ENCODE measurements at regions of chr10 and their contacts with region 1.

Region 1: GRCh38 chr10:33008499-33009243 is 50.6 kb upstream of the ITGB1 start:
- DNase-seq: peak; percentile 81
- H3K4me3 Mint-ChIP-seq: peak overlapping the region; percentile 52
- H3K27ac Mint-ChIP-seq: peak overlapping the region; percentile 9
- H3K4me1 Mint-ChIP-seq: peaks cover 34% of the 10 kb centered on the region
- H3K27me3 Mint-ChIP-seq: peaks cover 9% of the 10 kb centered on the region

Region 2: GRCh38 chr10:32256613-32257437 is 751.8 kb before region 1 on chr10:
- CTCF ChIA-PET with region 1: no interaction called
- intact Hi-C with region 1: loop called (anchors 5 kb)
- DNase-seq: peak; percentile 81
- H3K4me3 Mint-ChIP-seq: no peak overlapping the region
- H3K27ac Mint-ChIP-seq: no peak overlapping the region
- H3K4me1 Mint-ChIP-seq: peaks cover 8% of the 10 kb centered on the region
- H3K27me3 Mint-ChIP-seq: no peaks in the 10 kb centered on the region

Region 3: DNA sequence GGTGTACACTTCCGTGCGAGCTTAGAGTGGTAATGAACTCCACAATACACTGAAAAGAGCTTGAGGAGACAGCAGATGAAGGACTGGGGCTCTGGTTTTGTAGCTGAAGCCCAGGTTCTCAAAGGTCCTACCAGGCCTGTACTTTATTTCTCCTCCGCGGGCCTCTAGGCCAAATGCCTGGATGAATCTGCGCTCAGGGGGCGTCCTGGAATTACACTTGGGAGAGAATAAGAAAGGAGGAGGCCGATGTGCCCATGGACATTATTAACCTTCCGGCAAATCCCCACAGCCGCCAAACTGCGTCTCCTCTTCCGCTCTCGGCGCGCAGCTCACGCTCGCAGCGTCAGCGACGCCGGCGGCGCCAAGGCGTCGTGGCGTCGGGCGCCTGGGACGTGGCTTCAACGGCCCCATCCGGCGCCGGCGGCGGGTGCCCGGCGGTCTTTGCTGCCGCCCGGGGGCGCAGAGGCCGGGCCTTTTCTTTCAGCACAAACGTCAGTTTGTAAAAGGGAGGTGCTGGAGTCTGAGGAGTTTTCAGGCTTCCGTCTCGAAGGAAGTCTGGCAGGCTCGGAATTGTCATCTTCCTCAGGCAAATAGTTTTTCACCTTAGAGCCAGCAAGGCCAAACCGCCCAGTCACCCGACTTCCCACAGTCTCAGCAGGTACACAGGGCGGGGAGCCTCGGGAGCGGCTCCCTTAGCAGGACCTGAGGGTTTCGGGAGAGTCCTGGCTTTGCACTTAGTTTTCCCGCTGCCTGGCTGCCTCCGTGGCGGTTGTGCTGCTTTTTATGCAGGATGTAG is 562.7 kb before region 1 on chr10 and contains the start of gene CCDC7:
- CTCF ChIA-PET with region 1: no interaction called
- intact Hi-C with region 1: loop called (anchors 1 kb)
- DNase-seq: peak; percentile 85
- H3K4me3 Mint-ChIP-seq: peak within 1 kb of the TSS; percentile 94
- H3K27ac Mint-ChIP-seq: peak within 1 kb of the TSS; percentile 98
- H3K4me1 Mint-ChIP-seq: peaks cover 14% of the 10 kb centered on the region
- H3K27me3 Mint-ChIP-seq: no peaks in the 10 kb centered on the region
- total RNA-seq, gene CCDC7: 6.8 to 8.9 TPM

Region 4: GRCh38 chr10:32795598-32796183 is 213.0 kb before region 1 on chr10:
- CTCF ChIA-PET with region 1: interaction called, 9 read pairs
- intact Hi-C with region 1: loop called (anchors 1 kb)
- DNase-seq: peak; percentile 17
- H3K4me3 Mint-ChIP-seq: no peak overlapping the region
- H3K27ac Mint-ChIP-seq: no peak overlapping the region
- H3K4me1 Mint-ChIP-seq: no peaks in the 10 kb centered on the region
- H3K27me3 Mint-ChIP-seq: no peaks in the 10 kb centered on the region

Region 5: DNA sequence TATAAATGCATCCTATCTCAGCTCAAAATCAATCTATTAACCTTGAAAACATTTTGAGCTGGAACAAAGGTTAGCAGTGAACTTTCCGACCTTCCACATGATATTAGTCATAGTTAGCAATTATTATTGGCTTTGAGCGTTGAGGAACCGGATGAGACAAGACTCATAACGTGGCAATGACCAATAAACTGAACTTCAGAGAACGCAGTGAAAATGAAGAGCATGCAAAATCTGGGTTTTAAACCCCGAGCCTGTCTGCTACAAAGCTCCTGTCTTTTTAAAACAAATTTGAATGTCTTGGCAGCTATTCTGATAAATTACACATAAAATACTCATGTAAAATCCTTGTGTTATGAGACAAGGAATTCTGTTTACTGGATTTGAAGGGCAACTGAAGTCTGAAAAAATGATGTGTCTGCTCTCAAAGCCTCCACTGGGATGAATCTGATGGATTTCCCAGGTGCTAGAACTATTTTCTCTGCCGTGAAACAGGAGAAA is 24.0 kb after region 1 on chr10:
- CTCF ChIA-PET with region 1: interaction called, 10 read pairs
- intact Hi-C with region 1: no loop called
- DNase-seq: no peak
- H3K4me3 Mint-ChIP-seq: no peak overlapping the region
- H3K27ac Mint-ChIP-seq: no peak overlapping the region
- H3K4me1 Mint-ChIP-seq: peaks cover 12% of the 10 kb centered on the region
- H3K27me3 Mint-ChIP-seq: no peaks in the 10 kb centered on the region

Region 6: GRCh38 chr10:33237736-33238624 is 229.3 kb after region 1 on chr10:
- CTCF ChIA-PET with region 1: no interaction called
- intact Hi-C with region 1: no loop called
- DNase-seq: no peak
- H3K4me3 Mint-ChIP-seq: no peak overlapping the region
- H3K27ac Mint-ChIP-seq: no peak overlapping the region
- H3K4me1 Mint-ChIP-seq: no peaks in the 10 kb centered on the region
- H3K27me3 Mint-ChIP-seq: no peaks in the 10 kb centered on the region